ENCODE measurements at regions of chr14 and their contacts with region 1.

Region 1: GRCh38 chr14:36373982-36374673 is 53.7 kb upstream of the MBIP start:
- DNase-seq: peak; percentile 80
- H3K4me3 Mint-ChIP-seq: no peak overlapping the region
- H3K27ac Mint-ChIP-seq: no peak overlapping the region
- H3K4me1 Mint-ChIP-seq: no peaks in the 10 kb centered on the region
- H3K27me3 Mint-ChIP-seq: no peaks in the 10 kb centered on the region

Region 2: DNA sequence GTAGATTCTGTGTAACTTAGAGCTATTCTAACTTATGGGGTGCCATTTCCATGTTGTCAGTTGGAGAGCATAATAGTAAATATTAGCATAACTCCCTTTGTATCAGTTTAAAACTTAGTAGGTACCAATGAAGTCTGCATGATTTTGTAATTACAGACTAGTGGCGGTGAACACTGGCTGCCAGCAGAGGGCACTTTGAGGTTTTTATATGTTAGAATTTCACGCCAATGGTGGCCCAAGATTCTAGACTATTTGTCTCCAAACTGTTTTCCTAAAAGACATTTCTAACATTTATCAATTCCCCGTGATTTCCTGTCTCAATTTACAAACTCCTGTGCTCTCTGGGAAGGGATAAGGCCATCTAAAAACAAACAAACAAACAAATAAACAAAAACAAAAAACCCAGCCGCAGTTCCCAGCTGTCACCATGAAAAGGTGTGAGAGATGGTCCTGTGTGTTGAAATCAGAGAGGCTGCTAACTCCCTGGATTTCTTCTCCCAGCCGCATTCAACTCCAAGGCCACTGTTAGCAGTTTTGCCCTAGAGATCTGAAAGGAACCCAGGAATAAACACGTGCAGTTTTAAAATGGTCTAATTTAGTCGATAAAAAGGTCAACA is 490.3 kb before region 1 on chr14:
- CTCF ChIA-PET with region 1: interaction called, 10 read pairs
- POLR2A ChIA-PET with region 1: no interaction called
- intact Hi-C with region 1: loop called (anchors 5 kb)
- DNase-seq: peak; percentile 28
- H3K4me3 Mint-ChIP-seq: no peak overlapping the region
- H3K27ac Mint-ChIP-seq: no peak overlapping the region
- H3K4me1 Mint-ChIP-seq: no peaks in the 10 kb centered on the region
- H3K27me3 Mint-ChIP-seq: no peaks in the 10 kb centered on the region

Region 3: DNA sequence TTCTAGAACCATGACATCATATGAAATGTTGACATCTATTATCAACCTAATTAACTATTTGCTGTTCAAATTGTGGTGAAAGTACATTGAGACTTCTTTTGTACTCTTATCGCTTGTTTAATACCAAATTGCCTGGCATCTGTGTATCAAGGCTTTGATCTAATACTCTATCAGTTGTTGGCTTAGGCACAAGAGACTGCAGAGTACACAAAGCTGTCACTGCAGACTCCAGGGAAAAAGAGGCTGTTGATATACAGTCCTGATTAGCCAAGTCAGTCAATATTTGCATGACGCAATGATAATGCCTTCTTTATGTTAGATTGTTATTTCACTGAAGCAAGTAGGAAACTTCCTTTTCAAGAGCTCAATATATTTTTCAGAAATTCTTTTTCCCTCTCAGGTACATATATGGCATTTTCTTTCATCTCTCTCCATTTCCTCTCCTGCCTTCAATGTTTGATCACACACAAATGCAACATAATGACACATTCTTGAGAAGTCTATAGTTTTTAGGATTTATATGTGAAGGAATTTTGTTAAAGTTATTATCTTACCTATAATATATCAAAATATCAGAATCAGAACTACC is 165.3 kb before region 1 on chr14:
- CTCF ChIA-PET with region 1: interaction called, 3 read pairs
- POLR2A ChIA-PET with region 1: no interaction called
- intact Hi-C with region 1: loop called (anchors 2 kb)
- DNase-seq: no peak
- H3K4me3 Mint-ChIP-seq: no peak overlapping the region
- H3K27ac Mint-ChIP-seq: no peak overlapping the region
- H3K4me1 Mint-ChIP-seq: peaks cover 3% of the 10 kb centered on the region
- H3K27me3 Mint-ChIP-seq: peaks cover 6% of the 10 kb centered on the region

Region 4: DNA sequence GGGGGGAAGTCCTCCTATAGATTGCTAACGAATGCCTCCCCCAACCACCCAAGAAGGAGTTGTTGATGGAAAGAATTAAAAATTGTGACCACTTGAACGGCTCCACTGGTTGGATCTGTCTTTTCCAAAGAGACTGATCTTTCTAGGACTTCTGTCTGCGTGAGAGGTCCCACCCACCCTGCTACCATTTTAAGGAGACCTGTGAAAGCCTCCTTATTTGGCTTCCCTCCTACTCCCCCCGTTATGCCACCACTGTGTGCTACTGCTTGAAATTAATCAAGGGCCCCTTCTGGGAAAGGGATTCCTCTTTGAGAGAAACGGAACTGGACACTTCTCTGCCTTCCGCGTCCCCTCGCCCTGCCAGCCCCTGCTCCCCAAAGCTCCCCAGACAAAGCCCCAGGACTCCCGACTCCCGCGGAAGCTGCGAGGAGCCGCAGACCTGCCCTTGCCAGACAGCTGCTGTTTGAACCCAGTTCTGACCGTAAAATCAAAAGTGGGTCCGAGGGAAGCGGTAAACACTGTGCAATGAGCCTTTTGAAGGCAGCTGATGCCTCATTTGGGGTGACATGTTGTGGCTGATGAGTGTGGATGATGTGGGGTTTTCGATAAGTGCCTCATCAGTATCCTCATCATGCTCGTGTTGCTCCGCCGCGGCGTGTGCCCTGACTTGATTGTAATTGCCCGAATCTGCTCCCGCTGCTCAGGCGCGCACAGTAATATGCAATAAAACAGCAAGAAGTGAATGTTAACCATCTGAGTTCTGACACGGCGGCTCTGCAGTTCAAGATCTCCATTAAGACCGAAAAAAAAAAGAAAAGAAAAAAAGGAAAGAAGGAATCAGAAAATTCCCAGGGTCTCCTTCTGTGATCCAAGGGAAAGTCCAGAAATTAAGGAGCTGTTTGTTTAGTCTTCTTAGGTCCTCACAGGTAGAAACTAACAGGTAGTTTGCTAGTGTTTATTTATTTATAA is 101.9 kb before region 1 on chr14:
- CTCF ChIA-PET with region 1: interaction called, 3 read pairs
- POLR2A ChIA-PET with region 1: no interaction called
- intact Hi-C with region 1: loop called (anchors 5 kb)
- DNase-seq: peak; percentile 61
- H3K4me3 Mint-ChIP-seq: peak overlapping the region; percentile 68
- H3K27ac Mint-ChIP-seq: no peak overlapping the region
- H3K4me1 Mint-ChIP-seq: peaks cover 7% of the 10 kb centered on the region
- H3K27me3 Mint-ChIP-seq: peaks cover 43% of the 10 kb centered on the region

Region 5: DNA sequence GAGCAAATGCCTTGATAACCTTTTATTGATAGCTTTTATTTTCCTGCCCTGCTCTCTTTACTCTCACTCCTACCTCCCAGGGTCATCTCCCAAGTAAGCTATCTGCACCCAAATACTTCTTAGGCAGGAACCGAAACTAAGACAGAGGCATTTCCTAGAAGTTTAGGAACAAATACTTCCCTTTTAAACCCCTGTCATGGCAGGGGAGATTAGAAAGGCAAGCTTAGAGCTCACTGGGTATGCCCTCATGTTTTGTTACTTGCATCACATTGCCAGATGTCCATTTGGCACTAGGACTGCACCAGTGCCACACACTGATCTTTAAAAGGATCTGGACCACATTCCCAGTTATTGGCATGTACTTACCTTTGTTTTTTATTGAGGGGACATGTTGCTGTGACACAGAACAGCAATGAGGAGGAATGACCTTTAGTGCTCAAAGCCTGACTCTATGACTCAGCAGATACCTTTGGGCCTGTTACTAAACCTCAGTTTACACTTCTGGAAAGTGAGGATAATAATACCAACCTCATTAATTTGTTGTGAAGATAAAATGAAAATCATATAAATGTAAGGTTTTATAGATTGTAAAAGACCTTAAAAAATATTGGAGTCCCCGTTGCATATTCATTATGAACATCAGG is 12.8 kb before region 1 on chr14:
- CTCF ChIA-PET with region 1: interaction called, 14 read pairs
- POLR2A ChIA-PET with region 1: no interaction called
- intact Hi-C with region 1: no loop called
- DNase-seq: no peak
- H3K4me3 Mint-ChIP-seq: no peak overlapping the region
- H3K27ac Mint-ChIP-seq: no peak overlapping the region
- H3K4me1 Mint-ChIP-seq: no peaks in the 10 kb centered on the region
- H3K27me3 Mint-ChIP-seq: peaks cover 3% of the 10 kb centered on the region

Region 6: DNA sequence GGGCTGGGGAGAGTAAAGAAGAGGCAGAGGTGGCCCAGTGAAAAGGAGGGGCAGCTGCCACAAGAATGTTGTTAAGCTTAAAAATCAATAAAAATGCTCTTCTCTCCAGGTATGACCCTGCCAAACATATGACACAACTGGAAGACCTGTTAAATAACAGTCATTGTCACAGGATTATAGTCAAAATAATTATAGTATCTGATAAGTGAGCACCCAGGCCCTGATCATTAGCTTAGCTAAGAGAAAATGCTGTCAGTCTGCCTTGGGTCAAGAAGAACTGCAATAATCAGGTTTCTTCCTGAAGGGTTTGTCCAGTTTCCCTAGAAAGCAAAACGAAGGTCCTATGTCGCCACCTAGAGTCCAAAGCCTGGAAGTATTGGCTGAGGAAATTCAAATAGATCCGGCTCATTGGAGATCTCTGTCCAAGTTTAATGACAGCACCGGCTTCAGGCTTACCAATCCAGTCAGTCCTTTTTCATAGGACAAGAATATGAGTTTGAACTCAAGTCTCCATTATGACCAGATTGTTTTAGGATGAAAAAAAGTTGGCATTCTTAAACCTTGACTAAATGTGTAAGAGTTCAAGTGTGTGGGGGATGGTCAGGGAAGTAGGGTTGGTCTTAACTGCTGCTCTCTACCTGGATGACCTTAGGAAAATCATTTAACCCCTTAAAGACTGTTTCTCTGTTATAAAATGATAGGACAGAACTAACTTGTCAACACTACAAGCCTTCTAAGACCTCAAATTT is 230.8 kb after region 1 on chr14:
- CTCF ChIA-PET with region 1: interaction called, 3 read pairs
- POLR2A ChIA-PET with region 1: no interaction called
- intact Hi-C with region 1: loop called (anchors 10 kb)
- DNase-seq: peak; percentile 40
- H3K4me3 Mint-ChIP-seq: no peak overlapping the region
- H3K27ac Mint-ChIP-seq: no peak overlapping the region
- H3K4me1 Mint-ChIP-seq: no peaks in the 10 kb centered on the region
- H3K27me3 Mint-ChIP-seq: peaks cover 10% of the 10 kb centered on the region